Left cardiac atrium (tissue), 4 donors: ENCODE measurements at regions of chr7 and their contacts with region 1.

Region 1: GRCh38 chr7:100407285-100408180 is 21.0 kb downstream of the ZCWPW1 start:
- DNase-seq: no peak
- ATAC-seq: peak; percentile 70 to 84

Region 2: DNA sequence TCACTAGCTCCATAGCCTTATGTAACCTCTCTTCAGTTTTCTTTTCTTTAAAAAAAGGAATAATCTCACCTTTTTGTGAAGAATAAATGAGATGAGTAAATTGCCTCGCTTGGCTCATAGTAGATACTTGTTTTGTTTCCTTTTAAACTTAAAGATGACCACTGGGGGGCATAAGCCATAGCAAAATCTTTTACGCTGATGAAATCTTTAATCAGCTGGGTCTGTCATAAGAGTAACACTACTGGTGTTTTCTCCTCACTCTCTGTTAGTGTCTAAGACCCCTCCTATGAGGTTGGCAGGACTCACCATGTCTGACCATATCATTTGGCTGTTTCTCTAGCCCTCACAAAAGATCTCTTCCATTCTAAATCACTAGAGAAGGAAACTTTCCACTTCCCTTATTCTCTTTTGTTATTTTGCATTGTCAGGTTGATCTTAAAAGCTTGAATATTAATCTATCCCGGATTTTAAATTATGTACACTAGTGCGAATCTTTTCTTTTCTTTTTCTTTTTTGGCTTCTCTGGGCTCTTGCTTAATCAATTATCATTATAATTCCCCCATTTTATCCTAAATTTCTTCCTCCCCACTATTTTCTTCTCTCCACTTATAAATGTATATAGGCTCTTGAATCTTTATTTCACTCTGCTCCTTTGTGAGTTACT is 217.4 kb before region 1 on chr7:
- intact Hi-C with region 1: loop called in 1 of 2 experiments (anchors 10 kb)
- DNase-seq: no peak
- ATAC-seq: peak; percentile 42 to 65